Endothelial cell of umbilical vein (primary cell): ENCODE measurements at regions of chr10 and their contacts with region 1.

Region 1: DNA sequence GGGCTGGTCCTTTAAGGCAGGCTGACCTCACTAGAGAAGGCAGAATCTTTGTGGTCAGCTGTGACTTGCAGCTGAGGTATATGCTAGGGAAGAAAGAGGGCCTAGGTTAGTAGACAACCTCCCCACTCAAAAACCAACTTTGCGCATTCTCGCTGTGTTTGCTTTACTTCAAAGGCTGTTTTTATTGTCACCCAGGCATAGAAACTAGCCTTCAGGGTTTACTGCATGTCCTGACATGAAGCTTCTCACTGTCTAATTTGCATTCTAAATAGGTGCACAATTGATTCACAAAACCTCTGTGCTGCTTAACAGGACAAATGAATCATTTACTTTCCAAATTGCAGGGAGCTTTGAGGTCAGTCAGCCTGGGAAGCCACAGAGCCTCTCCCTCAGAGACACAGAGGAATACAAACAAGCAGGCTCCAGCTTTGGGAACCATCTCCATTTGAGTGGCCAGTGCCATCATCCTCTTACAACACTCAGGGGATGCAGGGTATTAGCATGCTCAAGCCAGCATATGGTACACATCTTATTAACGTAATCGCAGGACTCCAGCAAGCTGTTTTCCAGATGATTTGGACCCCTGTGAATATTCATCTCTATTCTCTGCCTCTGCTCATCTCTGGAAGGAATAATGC is 596.4 kb upstream of the GHITM start:
- DNase-seq: no peak
- H3K4me3 ChIP-seq: no peak overlapping the region
- H3K27ac ChIP-seq: no peak overlapping the region
- H3K4me1 ChIP-seq: peaks cover 16% of the 10 kb centered on the region
- H3K27me3 ChIP-seq: no peaks in the 10 kb centered on the region
- CTCF ChIP-seq: no peak
- POLR2A ChIP-seq: no peak

Region 2: DNA sequence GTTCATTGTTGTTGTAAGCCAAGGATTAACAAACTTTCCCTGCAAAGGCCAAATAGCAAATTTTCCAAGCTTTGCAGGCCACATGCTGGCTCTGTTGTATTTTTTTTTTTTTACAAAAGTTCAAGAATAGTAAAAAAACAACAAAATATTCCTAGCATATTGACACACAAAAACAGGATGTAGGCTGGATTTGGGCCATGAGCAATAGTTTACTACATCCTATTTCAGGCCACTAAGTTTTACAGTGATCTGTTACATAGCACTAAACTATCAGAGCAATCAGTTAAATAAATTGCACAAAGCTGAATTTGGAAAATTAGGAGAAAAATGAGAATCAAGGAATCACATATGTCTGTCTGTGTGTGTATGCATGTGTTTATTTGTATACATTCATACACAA is 104.6 kb after region 1 on chr10:
- CTCF ChIA-PET with region 1: interaction called, 3 read pairs
- POLR2A ChIA-PET with region 1: no interaction called
- dilution Hi-C with region 1: no loop called
- intact Hi-C with region 1: loop called (anchors 5 kb)
- DNase-seq: peak; percentile 52
- H3K4me3 ChIP-seq: no peak overlapping the region
- H3K27ac ChIP-seq: peak overlapping the region; percentile 55
- H3K4me1 ChIP-seq: peaks cover 45% of the 10 kb centered on the region
- H3K27me3 ChIP-seq: no peaks in the 10 kb centered on the region
- CTCF ChIP-seq: no peak
- POLR2A ChIP-seq: no peak